Activated naive CD4-positive, alpha-beta T cell treated with anti-CD3 and anti-CD28 coated beads for 36 hours (primary cell): ENCODE measurements at regions of chr20 and their contacts with region 1.

Region 1: GRCh38 chr20:36050436-36051317 is 82.3 kb downstream of the CNBD2 start:
- DNase-seq: peak; percentile 95
- H3K4me3 Mint-ChIP-seq: peak overlapping the region; percentile 82
- H3K27ac Mint-ChIP-seq: peak overlapping the region; percentile 83
- H3K4me1 Mint-ChIP-seq: peaks cover 35% of the 10 kb centered on the region
- H3K27me3 Mint-ChIP-seq: no peaks in the 10 kb centered on the region

Region 2: DNA sequence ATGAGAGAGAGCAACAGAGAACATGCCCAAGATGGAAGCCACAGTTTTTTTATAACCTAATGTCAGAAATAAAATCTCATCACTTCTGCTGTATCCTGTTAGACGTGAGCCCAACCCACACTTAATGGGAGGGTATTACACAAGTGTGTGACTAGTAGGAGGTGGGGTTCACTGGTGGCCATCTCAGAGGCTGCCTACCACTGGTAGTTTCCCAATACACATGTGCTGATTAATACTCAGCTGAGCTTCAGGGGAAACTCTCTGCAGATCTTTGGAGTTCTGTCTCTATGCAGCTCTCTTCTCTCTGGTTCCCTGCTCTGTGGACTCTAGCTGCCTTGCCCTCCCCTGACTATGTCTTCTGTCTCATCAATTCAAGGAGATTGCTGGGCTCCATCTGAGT is 46.6 kb before region 1 on chr20:
- CTCF ChIA-PET with region 1: no interaction called
- intact Hi-C with region 1: no loop called
- DNase-seq: no peak
- H3K4me3 Mint-ChIP-seq: no peak overlapping the region
- H3K27ac Mint-ChIP-seq: no peak overlapping the region
- H3K4me1 Mint-ChIP-seq: no peaks in the 10 kb centered on the region
- H3K27me3 Mint-ChIP-seq: no peaks in the 10 kb centered on the region

Region 3: GRCh38 chr20:36064658-36065426 is 14.2 kb after region 1 on chr20:
- CTCF ChIA-PET with region 1: no interaction called
- intact Hi-C with region 1: loop called (anchors 2 kb)
- DNase-seq: peak; percentile 94
- H3K4me3 Mint-ChIP-seq: peak overlapping the region; percentile 85
- H3K27ac Mint-ChIP-seq: no peak overlapping the region
- H3K4me1 Mint-ChIP-seq: peaks cover 5% of the 10 kb centered on the region
- H3K27me3 Mint-ChIP-seq: no peaks in the 10 kb centered on the region

Region 4: DNA sequence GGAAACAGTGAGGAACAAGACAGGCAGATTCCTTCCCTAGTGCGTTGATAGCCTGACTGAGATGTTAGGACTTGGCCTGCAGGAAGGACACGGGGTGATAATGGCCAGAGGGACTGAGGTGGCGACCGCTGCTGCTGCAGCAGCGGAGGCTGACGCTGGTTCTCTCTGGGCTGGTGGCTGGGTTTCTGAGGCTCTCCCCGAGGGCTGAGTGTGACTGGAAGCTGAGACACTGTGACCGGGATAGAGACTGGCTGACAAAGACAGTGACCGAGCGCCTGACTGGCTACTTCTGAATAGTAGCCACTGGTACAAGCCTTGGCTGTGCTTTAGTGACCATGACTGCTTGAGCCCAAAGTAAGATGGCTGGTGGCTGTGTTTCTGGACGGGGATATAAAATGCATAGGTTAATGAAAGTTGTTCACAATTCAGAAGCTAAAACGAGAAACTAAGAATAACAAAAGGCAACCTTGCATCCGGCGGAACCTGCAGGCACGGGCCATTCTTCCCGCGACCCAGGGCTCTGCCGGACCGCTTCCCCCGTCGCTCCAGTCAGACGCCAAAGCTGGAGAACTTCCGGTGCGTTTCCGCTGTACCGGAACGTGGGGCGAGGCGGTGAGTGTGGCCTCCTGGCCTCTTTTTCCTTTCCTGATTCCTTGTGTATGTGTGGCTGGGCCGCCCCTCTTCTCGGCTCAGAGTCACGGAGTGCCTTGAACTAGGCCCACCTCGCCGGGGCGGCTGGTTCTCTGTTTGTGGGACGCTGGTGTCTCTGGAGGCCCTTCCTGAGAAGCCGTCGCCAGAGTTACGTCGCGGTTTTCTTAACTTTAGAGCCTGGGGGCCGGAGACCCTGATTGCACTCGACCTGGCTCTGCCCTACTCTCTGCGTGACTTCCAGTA is 185.5 kb after region 1 on chr20 and contains the start of gene AAR2:
- CTCF ChIA-PET with region 1: no interaction called
- intact Hi-C with region 1: loop called (anchors 2 kb)
- DNase-seq: peak; percentile 91
- H3K4me3 Mint-ChIP-seq: peak within 1 kb of the TSS; percentile 81
- H3K27ac Mint-ChIP-seq: peak within 1 kb of the TSS; percentile 80
- H3K4me1 Mint-ChIP-seq: peaks cover 34% of the 10 kb centered on the region
- H3K27me3 Mint-ChIP-seq: no peaks in the 10 kb centered on the region
- total RNA-seq, gene AAR2: 15.5 to 17.3 TPM